ENCODE measurements at regions of chr5 and their contacts with region 1.

Region 1: GRCh38 chr5:7261049-7261448 is 134.9 kb upstream of the ADCY2 start:
- H3K4me3 Mint-ChIP-seq: no peak overlapping the region
- H3K27ac Mint-ChIP-seq: no peak overlapping the region
- H3K4me1 Mint-ChIP-seq: no peaks in the 10 kb centered on the region
- H3K27me3 Mint-ChIP-seq: no peaks in the 10 kb centered on the region

Region 2: DNA sequence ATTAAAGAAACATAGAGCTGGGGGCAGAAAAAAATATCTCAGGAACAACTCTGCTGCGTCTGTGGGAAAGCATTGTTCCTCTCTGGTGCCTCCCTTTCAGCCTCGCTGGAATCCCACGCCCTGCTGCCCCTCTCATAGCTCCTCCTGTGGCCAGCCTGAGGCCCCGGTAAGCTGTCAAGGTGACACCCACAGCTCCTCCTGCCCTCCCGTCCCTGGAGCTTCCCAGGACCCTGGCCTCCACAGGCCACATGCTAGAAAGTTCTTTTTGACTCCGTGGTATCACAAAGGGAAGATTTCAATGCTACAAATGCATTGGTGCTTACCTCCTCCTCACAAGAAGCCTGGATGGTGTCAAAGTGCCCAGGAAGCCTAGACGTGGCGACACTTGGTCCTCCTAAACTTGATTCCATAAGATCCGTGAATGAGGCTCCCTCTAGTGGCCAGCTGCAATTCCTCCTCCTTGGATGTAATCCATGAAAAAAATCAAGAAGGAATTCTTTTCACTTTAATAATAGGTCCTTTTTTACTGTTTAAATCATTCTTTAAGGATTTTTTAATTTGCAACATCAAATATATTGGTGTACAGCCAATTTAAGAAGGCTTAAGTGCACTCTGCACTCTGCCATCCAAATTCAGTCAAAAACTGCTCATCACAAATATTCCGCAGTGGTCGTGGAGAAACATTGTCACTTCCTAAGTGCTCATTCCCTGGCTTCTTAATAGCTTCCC is 485.0 kb after region 1 on chr5:
- intact Hi-C with region 1: loop called (anchors 1 kb)
- H3K4me3 Mint-ChIP-seq: no peak overlapping the region
- H3K27ac Mint-ChIP-seq: no peak overlapping the region
- H3K4me1 Mint-ChIP-seq: no peaks in the 10 kb centered on the region
- H3K27me3 Mint-ChIP-seq: peaks cover 6% of the 10 kb centered on the region

Region 3: GRCh38 chr5:7815892-7816534 is 555.0 kb after region 1 on chr5:
- intact Hi-C with region 1: loop called (anchors 1 kb)
- H3K4me3 Mint-ChIP-seq: no peak overlapping the region
- H3K27ac Mint-ChIP-seq: no peak overlapping the region
- H3K4me1 Mint-ChIP-seq: peaks cover 13% of the 10 kb centered on the region
- H3K27me3 Mint-ChIP-seq: no peaks in the 10 kb centered on the region

Measured in dendritic cell treated with granulocyte-macrophage colony-stimulating factor and Interleukin-4, amounts not matched to agents 40 ng/mL and 50 ng/mL, for 4 days (primary cell).